H1 (cell line): ENCODE measurements at regions of chr4 and their contacts with region 1.

Region 1: DNA sequence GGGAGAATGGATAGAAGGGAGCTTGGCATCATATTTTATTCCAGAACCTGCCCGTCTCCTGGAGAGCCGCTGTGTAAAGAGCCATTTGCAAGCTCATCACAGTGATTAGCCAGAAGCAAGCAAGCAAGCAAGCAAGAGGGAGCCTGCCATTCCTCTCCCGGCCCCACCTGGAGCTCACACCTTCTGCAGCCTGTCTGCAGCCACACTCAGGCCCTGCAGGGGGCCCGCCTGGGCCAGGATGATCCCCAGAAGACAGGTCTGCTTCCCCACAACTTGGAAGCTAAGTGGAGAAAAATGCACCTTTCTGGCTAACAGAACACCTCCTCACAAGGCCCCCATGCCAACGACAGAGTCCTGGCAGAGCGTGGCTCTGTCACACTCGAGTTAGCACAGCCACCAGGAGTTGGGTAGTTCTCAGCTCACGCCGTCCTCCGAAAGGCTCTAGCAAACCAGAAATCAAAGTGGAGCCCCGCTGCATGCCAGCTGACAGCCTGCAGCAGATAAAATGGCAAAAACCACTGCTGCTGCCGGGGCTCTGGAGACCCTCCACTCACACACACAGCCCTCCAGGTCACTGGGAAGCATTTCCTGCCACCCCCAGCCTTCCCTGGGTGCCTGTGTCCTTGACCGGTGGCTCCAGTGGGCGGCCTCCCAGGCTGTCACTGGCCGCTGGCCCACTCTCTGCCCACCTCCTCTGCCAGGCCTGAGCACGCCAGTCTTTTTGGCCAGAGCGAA is 54.9 kb downstream of the DCTD start:
- DNase-seq: no peak
- H3K4me3 ChIP-seq: no peak overlapping the region
- H3K27ac ChIP-seq: no peak overlapping the region
- H3K4me1 ChIP-seq: peaks cover 0 to 11% (median 6%) of the 10 kb centered on the region in 4 experiments; a peak in 6 of 7 replicates
- H3K27me3 ChIP-seq: no peaks in the 10 kb centered on the region
- CTCF ChIP-seq: peak in 2 of 3 experiments; percentile 11 to 35; a peak in 3 of 4 replicates
- EP300 ChIP-seq: no peak
- POLR2A ChIP-seq: no peak
- RAD21 ChIP-seq: peak; percentile 30 to 35; a peak in 2 of 4 replicates

Region 2: GRCh38 chr4:182427554-182427953 is 434.8 kb before region 1 on chr4:
- CTCF ChIA-PET with region 1: no interaction called
- POLR2A ChIA-PET with region 1: no interaction called
- DNase-seq: no peak
- H3K4me3 ChIP-seq: no peak overlapping the region
- H3K27ac ChIP-seq: no peak overlapping the region
- H3K4me1 ChIP-seq: no peaks in the 10 kb centered on the region
- H3K27me3 ChIP-seq: no peaks in the 10 kb centered on the region
- CTCF ChIP-seq: no peak
- EP300 ChIP-seq: no peak
- POLR2A ChIP-seq: no peak
- RAD21 ChIP-seq: no peak

Region 3: DNA sequence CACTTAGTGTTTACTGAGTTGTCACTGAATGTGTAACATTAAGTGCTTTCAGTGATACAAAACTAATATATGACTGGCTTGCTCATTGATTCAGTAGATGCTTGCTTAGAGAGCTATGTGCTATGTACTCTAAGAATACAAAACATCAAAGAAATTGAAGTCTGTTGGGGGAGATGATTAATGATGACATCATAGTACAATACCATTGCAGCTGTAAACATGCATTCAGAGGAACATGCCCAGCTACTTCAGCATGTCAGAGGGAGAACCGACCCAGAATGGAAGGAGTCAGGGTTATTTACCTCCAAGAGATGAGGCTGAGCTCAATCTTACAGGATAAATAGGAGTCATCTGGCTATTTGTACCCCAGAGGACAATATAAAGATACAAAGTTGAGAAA is 328.3 kb before region 1 on chr4:
- CTCF ChIA-PET with region 1: no interaction called
- POLR2A ChIA-PET with region 1: no interaction called
- DNase-seq: no peak
- H3K4me3 ChIP-seq: no peak overlapping the region
- H3K27ac ChIP-seq: no peak overlapping the region
- H3K4me1 ChIP-seq: peaks cover 6 to 17% (median 14%) of the 10 kb centered on the region in 4 experiments; a peak in 6 of 7 replicates
- H3K27me3 ChIP-seq: no peaks in the 10 kb centered on the region
- CTCF ChIP-seq: no peak
- EP300 ChIP-seq: no peak
- POLR2A ChIP-seq: no peak
- RAD21 ChIP-seq: no peak

Region 4: DNA sequence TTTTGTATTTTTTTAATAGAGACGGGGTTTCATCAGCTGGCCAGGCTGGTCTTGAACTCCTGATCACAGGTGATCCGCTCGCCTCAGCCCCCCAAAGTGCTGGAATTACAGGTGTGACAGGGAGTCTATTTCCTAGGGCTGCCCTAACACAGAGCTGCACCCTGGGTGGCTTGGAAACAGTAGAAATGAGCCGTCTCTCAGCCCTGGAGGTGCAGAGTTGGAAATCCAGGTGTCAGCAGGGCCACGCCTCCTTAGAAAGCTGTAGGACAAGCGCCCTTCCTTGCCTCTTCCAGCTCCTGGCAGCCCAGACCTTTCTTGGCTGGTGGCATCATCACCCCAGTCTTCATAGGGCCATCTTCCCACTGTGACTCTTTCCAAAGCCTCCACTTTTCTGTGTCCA is 16.7 kb before region 1 on chr4:
- CTCF ChIA-PET with region 1: interaction called, 10 read pairs
- POLR2A ChIA-PET with region 1: no interaction called
- DNase-seq: no peak
- H3K4me3 ChIP-seq: no peak overlapping the region
- H3K27ac ChIP-seq: no peak overlapping the region
- H3K4me1 ChIP-seq: peaks cover 0 to 3% (median 1%) of the 10 kb centered on the region in 4 experiments; a peak in 2 of 7 replicates
- H3K27me3 ChIP-seq: no peaks in the 10 kb centered on the region
- CTCF ChIP-seq: no peak
- EP300 ChIP-seq: no peak
- POLR2A ChIP-seq: no peak
- RAD21 ChIP-seq: no peak